Kidney (tissue), 22 donors: ENCODE measurements at regions of chr6 and their contacts with region 1.

Region 1: DNA sequence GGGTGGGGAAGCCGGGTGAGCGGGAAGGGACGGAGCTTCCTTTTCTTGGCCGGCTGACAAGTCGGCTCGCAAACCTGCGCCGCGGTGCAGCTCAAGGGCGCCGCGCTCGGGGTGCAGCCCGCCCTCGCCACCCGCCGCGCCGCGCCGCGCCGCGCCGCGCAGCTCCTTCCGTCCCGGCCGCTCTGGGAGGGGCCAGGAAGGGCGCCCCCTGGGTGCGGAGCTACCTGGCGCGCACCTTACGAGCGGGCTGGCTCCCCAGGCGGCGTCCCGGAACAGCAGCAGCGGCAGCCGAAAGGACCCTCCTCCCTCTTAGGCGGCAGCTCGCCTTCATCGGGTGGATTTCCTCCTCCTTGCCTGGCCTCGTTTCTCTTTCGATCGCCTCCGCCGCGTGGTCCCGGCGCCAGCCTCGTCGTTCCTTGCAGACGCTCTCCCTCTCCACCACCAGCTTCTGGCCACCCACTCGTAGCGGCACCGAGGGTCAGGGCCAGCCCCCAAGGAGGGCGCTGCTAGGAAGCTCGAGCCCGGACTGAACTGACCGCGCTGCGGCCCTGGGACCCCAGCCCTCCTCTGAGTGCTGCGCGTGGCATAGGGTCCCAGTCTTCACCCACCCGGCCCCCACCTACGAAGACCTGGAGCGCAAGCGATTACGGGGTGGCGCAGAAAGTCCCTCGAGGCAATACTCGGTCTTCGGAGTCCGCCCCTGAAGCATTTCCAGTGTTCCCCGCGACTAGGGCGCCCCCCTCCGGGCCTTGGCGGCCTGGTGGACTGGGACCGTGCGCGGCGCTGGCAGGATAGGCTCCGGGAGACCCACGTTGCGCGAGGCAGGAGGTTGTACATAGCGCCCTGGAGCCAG is at the start of gene MAP3K5:
- DNase-seq: peak; percentile 93 to 98 (median 94)
- H3K4me3 ChIP-seq: peak within 1 kb of the TSS; percentile 75 to 96 (median 89)
- H3K27ac ChIP-seq: peak within 1 kb of the TSS; percentile 99
- H3K4me1 ChIP-seq: peaks cover 0 to 8% (median 4%) of the 10 kb centered on the region in 3 donors
- H3K27me3 ChIP-seq: no peaks in the 10 kb centered on the region
- CTCF ChIP-seq: peak; percentile 83
- total RNA-seq, gene MAP3K5: 32.9 TPM

Region 2: GRCh38 chr6:136582711-136583471 is 209.7 kb before region 1 on chr6:
- intact Hi-C with region 1: loop called (anchors 10 kb)
- DNase-seq: peak in 2 of 5 donors; percentile 17 to 60
- H3K4me3 ChIP-seq: no peak overlapping the region
- H3K27ac ChIP-seq: no peak overlapping the region
- H3K4me1 ChIP-seq: no peaks in the 10 kb centered on the region
- H3K27me3 ChIP-seq: no peaks in the 10 kb centered on the region
- CTCF ChIP-seq: peak; percentile 40

Region 3: DNA sequence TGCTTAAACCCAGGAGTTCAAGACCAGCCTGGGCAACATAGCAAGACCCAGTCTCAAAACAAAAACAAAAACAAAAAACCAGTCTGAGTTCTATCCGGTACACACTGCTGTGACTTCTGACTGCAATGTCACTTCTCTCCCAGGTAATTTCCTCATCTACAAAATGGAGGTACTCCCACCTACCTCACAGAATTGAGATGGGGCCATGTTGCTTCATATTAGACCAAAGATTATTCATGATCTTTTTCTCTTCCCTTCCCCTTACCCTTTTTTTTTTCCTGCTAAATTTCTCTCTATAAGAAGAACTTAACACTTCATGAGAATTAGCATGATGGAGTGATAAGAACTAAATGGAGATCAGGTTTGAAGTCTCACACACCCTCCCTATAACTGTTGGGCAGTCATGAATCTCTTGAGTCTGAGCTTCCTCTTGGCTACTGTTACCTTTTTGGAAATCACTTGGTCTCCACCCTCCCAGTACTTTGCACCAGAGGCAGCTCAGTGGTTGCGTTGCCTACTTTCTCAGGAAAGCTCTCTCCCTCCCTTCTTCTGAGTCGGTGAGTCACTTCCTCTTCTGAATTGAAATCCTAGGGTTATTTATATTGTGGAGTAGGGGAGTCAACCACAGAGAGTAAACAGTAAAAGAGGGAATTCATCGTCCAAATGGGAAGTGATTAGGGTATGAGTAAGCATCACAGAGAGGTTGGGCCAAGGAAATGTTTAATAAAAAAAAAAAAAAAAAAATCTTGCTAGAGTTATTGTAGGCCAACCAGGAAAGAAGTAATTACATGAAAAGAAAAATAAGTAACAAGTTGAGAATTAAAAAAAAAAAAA is 182.5 kb before region 1 on chr6:
- intact Hi-C with region 1: no loop called
- DNase-seq: no peak
- H3K4me3 ChIP-seq: no peak overlapping the region
- H3K27ac ChIP-seq: peak overlapping the region; percentile 4 to 20
- H3K4me1 ChIP-seq: peaks cover 0 to 7% (median 4%) of the 10 kb centered on the region in 3 donors
- H3K27me3 ChIP-seq: no peaks in the 10 kb centered on the region
- CTCF ChIP-seq: no peak

Region 4: GRCh38 chr6:136643850-136644596 is 148.6 kb before region 1 on chr6:
- intact Hi-C with region 1: loop called (anchors 10 kb)
- DNase-seq: peak; percentile 90 to 95 (median 91)
- H3K4me3 ChIP-seq: no peak overlapping the region
- H3K27ac ChIP-seq: peak overlapping the region; percentile 48 to 57
- H3K4me1 ChIP-seq: peaks cover 0 to 23% (median 19%) of the 10 kb centered on the region in 3 donors
- H3K27me3 ChIP-seq: no peaks in the 10 kb centered on the region
- CTCF ChIP-seq: peak; percentile 80

Region 5: GRCh38 chr6:136696238-136696637 is 96.4 kb before region 1 on chr6:
- intact Hi-C with region 1: no loop called
- DNase-seq: peak in 2 of 5 donors; percentile 54 to 66
- H3K4me3 ChIP-seq: no peak overlapping the region
- H3K27ac ChIP-seq: no peak overlapping the region
- H3K4me1 ChIP-seq: peaks cover 0 to 3% (median 0%) of the 10 kb centered on the region in 3 donors
- H3K27me3 ChIP-seq: no peaks in the 10 kb centered on the region
- CTCF ChIP-seq: no peak

Region 6: DNA sequence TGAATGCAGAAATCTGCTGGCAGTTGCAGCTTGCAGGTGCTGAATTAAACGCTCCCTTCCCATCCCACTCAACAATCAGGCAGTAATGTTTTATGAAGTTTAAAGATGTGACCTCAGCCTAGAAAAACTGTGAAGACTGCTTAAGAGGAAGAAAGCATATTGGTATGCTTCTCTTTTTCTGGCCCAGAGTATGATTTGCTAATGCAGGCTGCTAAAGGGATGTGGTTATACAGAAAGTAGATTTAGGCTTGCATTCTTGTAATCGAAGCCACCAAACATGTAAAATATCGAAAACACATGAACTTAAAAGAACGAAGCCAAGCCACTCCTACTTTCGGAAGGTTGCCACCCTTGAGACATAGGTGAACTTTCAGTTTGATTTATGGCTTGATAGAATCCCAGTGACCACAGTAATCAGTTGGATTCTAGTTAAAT is 41.1 kb before region 1 on chr6:
- intact Hi-C with region 1: no loop called
- DNase-seq: no peak
- H3K4me3 ChIP-seq: no peak overlapping the region
- H3K27ac ChIP-seq: no peak overlapping the region
- H3K4me1 ChIP-seq: peaks cover 0 to 9% (median 0%) of the 10 kb centered on the region in 3 donors
- H3K27me3 ChIP-seq: no peaks in the 10 kb centered on the region
- CTCF ChIP-seq: no peak